ENCODE measurements at regions of chrX and their contacts with region 1.

Region 1: GRCh38 chrX:56978172-56978571 is 17.2 kb downstream of the SPIN3 start:
- DNase-seq: peak; percentile 44
- ATAC-seq: peak; percentile 92
- H3K4me3 Mint-ChIP-seq: no peak overlapping the region
- H3K27ac Mint-ChIP-seq: no peak overlapping the region
- H3K4me1 Mint-ChIP-seq: no peaks in the 10 kb centered on the region
- H3K27me3 Mint-ChIP-seq: no peaks in the 10 kb centered on the region

Region 2: DNA sequence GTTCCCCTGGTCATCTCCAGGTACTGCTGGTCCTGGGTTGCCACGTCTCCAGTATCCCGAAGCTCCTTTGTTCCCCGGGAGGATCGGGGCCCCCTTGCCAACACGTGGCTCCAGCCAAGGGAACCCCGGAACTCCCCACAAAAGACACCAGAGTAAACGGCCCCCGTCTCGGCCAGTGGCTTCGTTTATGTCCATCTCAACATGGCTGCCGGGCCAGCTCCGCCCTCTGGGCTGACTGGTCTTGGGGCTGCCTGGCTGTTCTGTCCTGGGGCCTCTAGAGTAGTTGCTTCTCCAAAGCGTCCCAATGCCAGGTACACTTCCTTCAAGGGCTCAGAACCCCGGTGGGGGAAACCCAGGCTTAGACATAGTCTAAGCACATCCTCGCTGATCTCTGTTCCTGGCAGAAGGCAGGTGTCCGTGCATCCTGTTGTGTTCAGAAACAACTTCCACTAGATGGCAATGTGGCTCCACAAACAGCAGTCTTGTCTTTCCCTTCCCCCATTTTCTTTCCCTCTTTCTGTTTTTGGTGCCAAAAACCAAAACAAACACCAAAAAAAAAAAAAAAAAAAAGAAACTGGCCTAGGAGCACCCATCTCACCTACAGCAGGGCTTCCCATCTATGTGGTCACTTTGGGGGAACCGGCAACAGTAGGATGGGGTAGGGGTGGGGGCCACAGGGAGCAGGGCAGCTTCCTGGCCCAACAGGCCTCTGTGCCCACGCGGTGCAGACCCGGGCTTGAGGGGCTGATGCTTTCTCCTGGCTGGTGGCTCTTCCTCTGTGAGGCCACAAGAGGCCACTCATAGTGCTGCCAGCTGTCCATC is 213.8 kb before region 1 on chrX:
- CTCF ChIA-PET with region 1: interaction called, 17 read pairs
- POLR2A ChIA-PET with region 1: no interaction called
- intact Hi-C with region 1: no loop called
- DNase-seq: peak; percentile 78
- ATAC-seq: peak; percentile 68
- H3K4me3 Mint-ChIP-seq: peak overlapping the region; percentile 67
- H3K27ac Mint-ChIP-seq: peak overlapping the region; percentile 99
- H3K4me1 Mint-ChIP-seq: peaks cover 51% of the 10 kb centered on the region
- H3K27me3 Mint-ChIP-seq: no peaks in the 10 kb centered on the region

Region 3: DNA sequence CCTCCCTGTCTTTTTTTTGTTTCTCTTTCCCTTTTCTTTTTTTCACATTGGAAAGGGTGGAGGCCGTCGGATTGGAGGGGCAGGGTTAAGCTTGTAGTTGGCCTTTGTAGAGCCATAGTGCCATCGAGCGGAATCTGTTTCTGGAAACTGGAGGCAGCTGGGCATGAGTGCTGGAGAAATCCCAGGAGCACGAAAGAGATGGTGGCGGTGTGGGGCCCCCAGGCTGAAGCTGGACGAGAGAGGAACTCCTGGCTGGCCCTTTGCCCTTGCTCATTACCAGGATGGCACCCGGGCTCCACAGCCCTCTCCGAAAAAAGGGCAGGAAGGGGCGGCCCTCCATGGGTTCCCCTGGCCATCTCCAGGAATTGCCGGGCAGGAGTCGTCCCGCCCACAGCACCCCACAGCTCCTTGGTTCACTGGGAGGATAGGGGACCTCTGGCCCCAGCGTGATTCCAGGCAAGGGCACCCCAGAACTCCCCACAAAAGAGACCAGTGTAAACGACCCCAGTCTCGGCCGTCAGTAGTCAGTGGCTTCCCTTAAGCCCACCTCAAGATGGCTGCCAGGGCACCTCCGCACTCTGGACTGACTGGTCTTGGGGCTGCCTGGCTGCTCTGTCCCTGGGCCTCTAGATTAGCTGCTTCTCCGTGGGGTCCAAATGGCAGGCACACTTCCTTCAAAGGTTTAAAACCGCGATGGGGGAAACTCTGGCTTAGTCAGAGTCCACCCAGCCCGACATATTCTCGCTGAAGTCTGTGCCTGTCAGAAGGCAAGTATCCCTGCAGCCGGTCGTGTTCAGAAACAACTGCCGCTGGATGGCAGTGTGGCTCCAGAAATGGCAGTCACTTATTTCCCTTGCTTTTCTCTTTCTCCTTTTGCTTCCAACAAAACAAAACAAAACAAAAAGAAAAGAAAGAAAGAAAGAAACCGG is 175.0 kb before region 1 on chrX:
- CTCF ChIA-PET with region 1: interaction called, 6 read pairs
- POLR2A ChIA-PET with region 1: no interaction called
- intact Hi-C with region 1: loop called in 1 of 2 experiments (anchors 1 kb)
- DNase-seq: peak; percentile 73
- ATAC-seq: peak; percentile 17
- H3K4me3 Mint-ChIP-seq: no peak overlapping the region
- H3K27ac Mint-ChIP-seq: peak overlapping the region; percentile 42
- H3K4me1 Mint-ChIP-seq: peaks cover 35% of the 10 kb centered on the region
- H3K27me3 Mint-ChIP-seq: no peaks in the 10 kb centered on the region